Activated T-helper 1 cell treated with anti-CD3 and anti-CD28 coated beads, Interleukin-12 subunit alpha, Interleukin-12 subunit beta, Interleukin-2, Interleukin-4 antibody, amounts not matched to agents 30 ng/mL and 10 ng/mL and 1 ng/mL, durations not matched to agents 14 hours and 24 hours and 36 hours (primary cell): ENCODE measurements at regions of chr5 and their contacts with region 1.

Region 1: DNA sequence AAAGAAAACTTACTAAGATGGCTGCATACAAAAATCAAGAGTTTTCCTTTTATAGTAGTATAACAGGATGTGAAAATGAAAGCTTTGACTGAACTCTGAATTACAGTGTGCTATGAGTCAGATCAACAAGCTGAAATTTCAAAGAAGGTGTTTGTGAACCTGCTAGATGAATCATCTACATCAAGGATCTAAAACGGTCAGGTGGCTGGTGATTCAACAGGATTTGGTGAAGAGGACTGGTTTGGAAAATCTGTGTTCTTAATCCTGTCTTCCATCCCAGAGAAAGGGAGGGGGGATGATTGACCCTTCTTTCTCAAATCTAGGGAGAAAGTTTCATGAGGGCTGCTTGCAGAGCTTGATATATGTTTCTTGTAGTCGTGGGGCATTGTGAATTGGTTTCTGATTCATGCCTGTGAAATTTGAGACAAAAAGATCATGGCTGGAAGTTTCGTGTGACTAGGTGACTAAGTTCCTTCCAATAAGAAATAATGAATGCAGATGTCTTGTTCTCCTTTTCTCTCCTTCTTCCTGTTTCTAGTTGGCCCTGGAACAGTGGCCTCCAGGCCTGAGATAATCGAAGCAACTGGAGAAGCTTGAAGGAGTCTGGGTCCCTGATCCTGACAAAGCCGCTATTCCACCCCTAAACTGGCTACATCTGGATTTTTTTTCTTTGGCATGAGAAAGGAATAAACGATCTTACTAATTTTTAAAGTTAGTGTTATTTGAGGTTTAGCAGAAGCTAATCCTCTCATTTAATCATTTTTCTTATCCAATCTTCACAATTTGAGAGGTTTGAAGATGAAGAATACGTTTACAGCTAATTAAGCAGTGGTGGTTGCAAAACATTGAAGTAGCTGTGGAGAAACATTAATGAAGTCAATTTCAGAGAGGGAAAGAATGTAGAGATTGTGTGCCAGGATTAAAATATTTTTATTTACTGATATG is 67.2 kb downstream of the MRPS30 start:
- DNase-seq: peak; percentile 30
- H3K4me3 Mint-ChIP-seq: peak overlapping the region; percentile 59
- H3K27ac Mint-ChIP-seq: peak overlapping the region; percentile 90
- H3K4me1 Mint-ChIP-seq: peaks cover 27% of the 10 kb centered on the region
- H3K27me3 Mint-ChIP-seq: no peaks in the 10 kb centered on the region

Region 2: GRCh38 chr5:44808435-44809214 is 67.3 kb before region 1 on chr5 and contains the start of gene MRPS30:
- intact Hi-C with region 1: loop called (anchors 1 kb)
- DNase-seq: peak; percentile 91
- H3K4me3 Mint-ChIP-seq: peak within 1 kb of the TSS; percentile 99
- H3K27ac Mint-ChIP-seq: peak within 1 kb of the TSS; percentile 98
- H3K4me1 Mint-ChIP-seq: peaks cover 42% of the 10 kb centered on the region
- H3K27me3 Mint-ChIP-seq: no peaks in the 10 kb centered on the region
- total RNA-seq, gene MRPS30: 62.9 and 63.5 TPM in 2 replicates

Region 3: GRCh38 chr5:44932922-44933585 is 57.1 kb after region 1 on chr5:
- intact Hi-C with region 1: loop called (anchors 5 kb)
- DNase-seq: no peak
- H3K4me3 Mint-ChIP-seq: no peak overlapping the region
- H3K27ac Mint-ChIP-seq: no peak overlapping the region
- H3K4me1 Mint-ChIP-seq: peaks cover 9% of the 10 kb centered on the region
- H3K27me3 Mint-ChIP-seq: no peaks in the 10 kb centered on the region

Region 4: GRCh38 chr5:44952376-44952775 is 76.4 kb after region 1 on chr5:
- intact Hi-C with region 1: loop called (anchors 5 kb)
- DNase-seq: no peak
- H3K4me3 Mint-ChIP-seq: no peak overlapping the region
- H3K27ac Mint-ChIP-seq: no peak overlapping the region
- H3K4me1 Mint-ChIP-seq: no peaks in the 10 kb centered on the region
- H3K27me3 Mint-ChIP-seq: no peaks in the 10 kb centered on the region